Activated CD4-positive, alpha-beta memory T cell treated with anti-CD3 and anti-CD28 coated beads for 36 hours (primary cell): ENCODE measurements at regions of chr7 and their contacts with region 1.

Region 1: DNA sequence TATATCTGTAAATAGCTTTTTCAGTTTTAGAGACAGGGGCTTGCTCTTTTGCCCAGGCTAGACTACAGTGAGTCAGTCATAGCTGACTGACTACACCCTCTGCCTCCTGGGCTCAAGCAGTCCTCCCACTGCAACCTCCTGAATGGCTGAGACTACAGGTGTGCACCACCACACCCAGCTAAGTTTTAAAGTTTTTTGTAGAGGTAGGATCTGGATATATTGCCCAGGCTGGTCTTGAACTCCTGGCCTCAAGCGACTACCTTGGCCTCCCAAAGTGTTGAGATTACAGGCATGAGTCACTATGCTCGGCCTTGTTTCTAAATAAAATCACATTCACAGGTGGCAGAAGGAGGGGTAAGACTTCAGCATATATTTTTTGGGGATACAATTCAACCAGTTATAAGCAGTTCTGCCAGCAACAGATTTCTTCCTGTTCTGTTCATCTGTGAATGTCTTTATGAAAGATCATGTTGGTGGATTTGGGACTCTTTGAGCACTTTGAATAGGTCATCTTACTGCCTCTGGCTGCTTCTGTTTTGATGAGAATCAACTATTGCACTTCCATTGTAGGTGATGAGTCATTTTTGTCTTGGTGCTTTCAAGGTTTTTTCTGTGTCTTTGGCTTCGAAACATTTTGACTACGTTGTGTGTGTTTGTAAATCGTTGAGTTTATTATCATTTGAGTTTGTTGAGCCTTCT is 15.7 kb downstream of the RBM33 start:
- DNase-seq: peak; percentile 21
- H3K4me3 Mint-ChIP-seq: peak overlapping the region; percentile 28
- H3K27ac Mint-ChIP-seq: peak overlapping the region; percentile 81
- H3K4me1 Mint-ChIP-seq: peaks cover 82% of the 10 kb centered on the region
- H3K27me3 Mint-ChIP-seq: no peaks in the 10 kb centered on the region

Region 2: DNA sequence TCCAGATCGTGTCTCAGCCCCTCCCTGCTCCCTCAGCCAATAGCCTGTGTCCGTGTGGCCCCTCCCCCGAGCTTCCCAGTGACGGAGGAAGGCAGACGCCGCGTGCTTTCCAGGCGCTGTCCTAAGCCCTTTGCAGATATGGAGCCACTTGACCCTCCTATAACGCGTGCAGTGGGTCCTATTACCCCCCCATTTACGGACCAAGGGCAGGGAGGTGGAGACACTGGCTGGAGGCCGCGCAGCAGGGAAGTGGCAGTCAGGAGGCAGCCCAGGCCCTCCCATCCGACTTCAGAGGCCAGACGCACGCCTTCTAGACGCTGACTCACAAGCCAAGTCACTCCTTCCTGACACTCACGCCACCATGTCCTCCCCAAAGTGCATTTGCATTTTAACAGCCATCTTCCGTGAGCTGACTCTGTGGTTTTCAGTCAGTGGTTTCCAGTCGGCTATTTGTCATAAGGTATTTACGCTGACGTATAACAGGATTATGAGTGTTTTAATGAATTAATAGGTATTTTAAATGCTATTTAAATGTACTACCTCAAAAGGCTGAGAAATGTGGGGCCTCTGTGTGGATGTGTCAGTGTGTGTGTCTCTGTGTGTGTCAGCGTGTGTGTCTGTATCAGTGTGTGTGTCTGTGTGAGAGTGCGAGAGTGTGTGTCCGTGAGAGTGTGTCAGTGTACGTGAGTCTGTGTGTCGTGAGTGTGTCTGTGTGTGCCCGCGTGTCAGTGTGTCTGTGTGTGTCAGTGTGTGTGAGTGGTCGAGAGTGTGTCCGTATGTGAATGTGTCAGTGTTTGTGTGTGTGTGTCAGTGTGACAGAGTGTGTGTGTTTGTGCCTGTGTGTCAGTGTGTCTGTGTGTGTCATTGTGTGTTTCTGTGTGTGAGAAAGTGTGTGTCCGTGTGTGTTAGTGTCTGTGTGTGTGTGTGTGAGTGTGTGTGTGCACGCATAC is 454.6 kb before region 1 on chr7:
- CTCF ChIA-PET with region 1: no interaction called
- POLR2A ChIA-PET with region 1: no interaction called
- intact Hi-C with region 1: loop called (anchors 5 kb)
- DNase-seq: peak; percentile 96
- H3K4me3 Mint-ChIP-seq: peak overlapping the region; percentile 75
- H3K27ac Mint-ChIP-seq: peak overlapping the region; percentile 100
- H3K4me1 Mint-ChIP-seq: peaks cover 45% of the 10 kb centered on the region
- H3K27me3 Mint-ChIP-seq: no peaks in the 10 kb centered on the region

Region 3: DNA sequence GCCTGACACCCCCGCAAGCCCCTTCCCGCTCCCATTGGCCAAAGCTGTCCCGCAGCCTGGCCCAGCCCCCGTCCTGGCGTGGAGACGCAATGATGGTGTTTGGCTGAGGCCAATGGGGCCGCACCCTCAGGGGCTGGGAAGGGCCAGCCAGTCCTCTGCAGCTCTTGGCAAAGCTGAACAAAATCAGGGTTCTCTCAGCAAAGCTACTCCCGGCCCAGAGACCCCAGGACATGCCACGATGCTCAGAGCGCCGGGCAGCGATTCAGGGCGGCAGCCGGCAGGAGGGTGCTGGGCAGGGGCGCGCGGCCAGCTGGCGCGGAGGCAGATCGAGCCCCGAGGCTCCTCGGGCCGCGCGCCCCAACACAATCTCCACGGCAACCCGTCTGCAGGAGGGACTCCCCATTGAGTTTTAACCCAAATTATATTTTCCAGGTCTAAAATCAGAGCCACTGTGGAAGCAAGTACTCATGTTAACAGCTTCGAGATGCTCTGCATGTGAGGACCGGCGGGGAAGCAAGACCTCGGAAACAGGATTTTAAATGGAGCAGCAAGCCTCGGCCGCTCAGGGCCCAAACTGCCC is 105.0 kb before region 1 on chr7:
- CTCF ChIA-PET with region 1: no interaction called
- POLR2A ChIA-PET with region 1: no interaction called
- intact Hi-C with region 1: no loop called
- DNase-seq: no peak
- H3K4me3 Mint-ChIP-seq: no peak overlapping the region
- H3K27ac Mint-ChIP-seq: no peak overlapping the region
- H3K4me1 Mint-ChIP-seq: no peaks in the 10 kb centered on the region
- H3K27me3 Mint-ChIP-seq: peaks cover 13% of the 10 kb centered on the region

Region 4: DNA sequence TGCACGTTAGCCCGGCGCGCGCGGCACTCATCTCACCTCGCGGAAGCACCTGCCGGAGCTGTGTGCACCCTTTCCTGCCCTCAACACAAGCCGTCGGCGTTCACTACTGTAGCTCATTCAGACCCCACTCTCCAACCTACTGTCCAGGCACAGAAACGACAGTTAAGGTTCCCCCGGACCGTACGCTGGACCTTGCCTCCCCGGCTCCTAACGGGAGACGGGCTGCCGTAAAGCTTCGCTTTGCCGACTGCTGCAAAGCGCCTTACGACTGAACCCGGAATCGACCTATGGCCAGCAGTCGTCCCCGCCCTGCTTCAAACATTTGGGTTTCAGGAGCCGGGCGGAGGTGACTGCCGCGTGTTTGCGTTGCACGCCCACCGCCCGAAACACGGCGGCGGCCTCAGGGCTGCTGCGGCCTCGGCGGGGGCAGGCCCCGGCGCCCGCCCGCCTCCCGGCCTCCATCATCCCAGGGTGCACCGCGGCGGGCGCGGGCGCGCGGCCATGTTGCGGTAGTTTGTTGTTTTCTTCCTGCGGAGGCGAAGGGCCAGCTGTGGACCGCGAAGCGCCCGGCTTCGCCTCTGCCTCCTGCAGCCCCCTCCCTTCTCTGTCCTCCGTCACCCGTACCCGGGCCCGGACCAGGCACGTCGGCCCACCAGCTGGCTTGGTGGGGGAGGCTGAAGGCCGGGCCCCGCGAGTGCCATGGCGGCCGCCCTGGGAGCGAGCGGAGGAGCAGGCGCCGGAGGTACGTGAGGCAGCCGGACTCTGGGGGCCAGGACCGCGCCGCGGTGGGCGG is 15.8 kb before region 1 on chr7 and contains the start of gene RBM33:
- CTCF ChIA-PET with region 1: no interaction called
- POLR2A ChIA-PET with region 1: interaction called, 3 read pairs
- intact Hi-C with region 1: loop called (anchors 1 kb)
- DNase-seq: peak; percentile 87
- H3K4me3 Mint-ChIP-seq: peak within 1 kb of the TSS; percentile 89
- H3K27ac Mint-ChIP-seq: peak within 1 kb of the TSS; percentile 94
- H3K4me1 Mint-ChIP-seq: peaks cover 40% of the 10 kb centered on the region
- H3K27me3 Mint-ChIP-seq: no peaks in the 10 kb centered on the region
- total RNA-seq, gene RBM33: 57.7 to 65.3 TPM

Region 5: GRCh38 chr7:155729834-155730233 is 69.6 kb after region 1 on chr7:
- CTCF ChIA-PET with region 1: no interaction called
- POLR2A ChIA-PET with region 1: no interaction called
- intact Hi-C with region 1: loop called (anchors 1 kb)
- DNase-seq: no peak
- H3K4me3 Mint-ChIP-seq: no peak overlapping the region
- H3K27ac Mint-ChIP-seq: no peak overlapping the region
- H3K4me1 Mint-ChIP-seq: peaks cover 31% of the 10 kb centered on the region
- H3K27me3 Mint-ChIP-seq: no peaks in the 10 kb centered on the region

Region 6: GRCh38 chr7:155746188-155746587 is 86.0 kb after region 1 on chr7:
- CTCF ChIA-PET with region 1: no interaction called
- POLR2A ChIA-PET with region 1: no interaction called
- intact Hi-C with region 1: loop called (anchors 5 kb)
- DNase-seq: peak; percentile 33
- H3K4me3 Mint-ChIP-seq: no peak overlapping the region
- H3K27ac Mint-ChIP-seq: peak overlapping the region; percentile 70
- H3K4me1 Mint-ChIP-seq: peaks cover 59% of the 10 kb centered on the region
- H3K27me3 Mint-ChIP-seq: no peaks in the 10 kb centered on the region

Region 7: DNA sequence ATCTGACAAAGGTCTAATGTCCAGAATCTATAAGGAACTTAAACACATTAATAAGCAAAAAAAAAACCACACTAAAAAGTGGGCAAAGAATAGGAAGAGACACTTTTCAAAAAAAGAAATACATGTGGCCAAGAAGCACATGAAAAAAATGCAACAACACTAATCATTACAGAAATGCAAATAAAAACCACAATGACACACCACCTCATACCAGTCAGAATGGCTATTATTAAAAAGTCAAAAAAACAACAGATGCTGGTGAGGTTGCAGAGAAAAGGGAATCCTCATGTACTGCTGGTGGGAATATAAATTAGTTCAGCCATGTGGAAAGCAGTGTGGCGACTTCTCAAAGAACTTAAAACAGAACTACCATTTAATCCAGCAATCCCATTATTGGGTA is 1113.8 kb after region 1 on chr7:
- CTCF ChIA-PET with region 1: no interaction called
- POLR2A ChIA-PET with region 1: no interaction called
- intact Hi-C with region 1: loop called (anchors 10 kb)
- DNase-seq: no peak
- H3K4me3 Mint-ChIP-seq: no peak overlapping the region
- H3K27ac Mint-ChIP-seq: peak overlapping the region; percentile 9
- H3K4me1 Mint-ChIP-seq: peaks cover 58% of the 10 kb centered on the region
- H3K27me3 Mint-ChIP-seq: no peaks in the 10 kb centered on the region